ENCODE measurements at regions of chr20 and their contacts with region 1.

Region 1: GRCh38 chr20:9978397-9979004 is 56.3 kb upstream of the ANKEF1 start:
- DNase-seq: peak in 2 of 5 donors; percentile 32 to 40
- ATAC-seq: peak; percentile 58 to 91 (median 88)
- H3K4me3 ChIP-seq: no peak overlapping the region
- H3K27ac ChIP-seq: no peak overlapping the region
- H3K4me1 ChIP-seq: peaks cover 0 to 9% (median 0%) of the 10 kb centered on the region in 12 donors
- H3K27me3 ChIP-seq: no peaks in the 10 kb centered on the region
- CTCF ChIP-seq: peak; percentile 54 to 92 (median 78)
- POLR2A ChIP-seq: no peak

Region 2: DNA sequence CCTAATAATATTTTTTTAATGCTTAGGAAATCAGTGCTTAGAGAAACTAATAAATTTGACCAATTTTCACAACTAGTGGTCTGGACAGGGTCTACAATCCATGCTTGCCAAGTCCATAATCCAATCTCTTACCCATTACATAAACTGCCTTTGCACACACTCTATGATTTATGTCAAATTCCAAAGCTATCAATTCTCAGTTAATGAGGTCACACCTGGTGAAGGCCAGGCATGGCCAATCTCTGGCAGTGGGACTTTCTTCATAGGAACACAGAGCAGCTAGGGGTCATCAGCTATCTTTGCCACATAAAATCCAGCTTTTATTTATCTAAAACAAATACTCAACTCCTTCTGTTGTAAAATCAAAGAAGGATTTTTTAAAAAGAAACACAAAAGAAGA is 160.8 kb before region 1 on chr20:
- intact Hi-C with region 1: no loop called
- DNase-seq: no peak
- ATAC-seq: no peak
- H3K4me3 ChIP-seq: no peak overlapping the region
- H3K27ac ChIP-seq: no peak overlapping the region
- H3K4me1 ChIP-seq: no peaks in the 10 kb centered on the region
- H3K27me3 ChIP-seq: no peaks in the 10 kb centered on the region
- CTCF ChIP-seq: no peak
- POLR2A ChIP-seq: no peak

Region 3: DNA sequence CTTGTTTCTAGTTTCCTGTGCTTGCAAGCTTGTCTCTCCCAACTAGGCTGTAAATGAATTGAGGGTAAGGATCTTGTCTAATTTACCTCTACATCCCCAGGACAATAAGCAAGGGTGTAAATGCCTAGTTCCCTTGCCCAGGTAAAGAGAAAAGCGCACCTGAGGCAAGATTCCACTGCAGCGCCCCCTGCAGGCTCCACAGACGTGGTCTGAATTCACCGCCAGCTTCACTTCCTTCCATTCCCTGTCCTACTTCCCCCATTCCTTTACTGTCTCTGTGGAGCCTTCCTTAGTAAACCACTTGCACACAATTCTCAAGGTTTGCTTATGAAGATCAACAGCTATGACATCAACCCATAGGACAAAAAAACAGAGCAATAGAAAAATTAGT is 98.6 kb after region 1 on chr20:
- intact Hi-C with region 1: loop called in 1 of 10 experiments (anchors 5 kb)
- DNase-seq: no peak
- ATAC-seq: no peak
- H3K4me3 ChIP-seq: no peak overlapping the region
- H3K27ac ChIP-seq: peak overlapping the region in 8 of 12 donors; percentile 8 to 76 (median 58)
- H3K4me1 ChIP-seq: peaks cover 0 to 22% (median 3%) of the 10 kb centered on the region in 12 donors
- H3K27me3 ChIP-seq: peaks cover 0 to 6% (median 0%) of the 10 kb centered on the region in 9 donors
- CTCF ChIP-seq: peak in 7 of 12 donors; percentile 2 to 32 (median 16)
- POLR2A ChIP-seq: no peak

Region 4: GRCh38 chr20:10090588-10091166 is 112.2 kb after region 1 on chr20:
- intact Hi-C with region 1: loop called (anchors 2 to 5 kb)
- DNase-seq: peak; percentile 22 to 49 (median 31)
- ATAC-seq: peak in 3 of 4 donors; percentile 69 to 81 (median 80)
- H3K4me3 ChIP-seq: no peak overlapping the region
- H3K27ac ChIP-seq: no peak overlapping the region
- H3K4me1 ChIP-seq: no peaks in the 10 kb centered on the region
- H3K27me3 ChIP-seq: no peaks in the 10 kb centered on the region
- CTCF ChIP-seq: peak; percentile 56 to 85 (median 72)
- POLR2A ChIP-seq: no peak